Activated CD4-positive, alpha-beta memory T cell treated with anti-CD3 and anti-CD28 coated beads for 36 hours (primary cell): ENCODE measurements at regions of chr19 and their contacts with region 1.

Region 1: DNA sequence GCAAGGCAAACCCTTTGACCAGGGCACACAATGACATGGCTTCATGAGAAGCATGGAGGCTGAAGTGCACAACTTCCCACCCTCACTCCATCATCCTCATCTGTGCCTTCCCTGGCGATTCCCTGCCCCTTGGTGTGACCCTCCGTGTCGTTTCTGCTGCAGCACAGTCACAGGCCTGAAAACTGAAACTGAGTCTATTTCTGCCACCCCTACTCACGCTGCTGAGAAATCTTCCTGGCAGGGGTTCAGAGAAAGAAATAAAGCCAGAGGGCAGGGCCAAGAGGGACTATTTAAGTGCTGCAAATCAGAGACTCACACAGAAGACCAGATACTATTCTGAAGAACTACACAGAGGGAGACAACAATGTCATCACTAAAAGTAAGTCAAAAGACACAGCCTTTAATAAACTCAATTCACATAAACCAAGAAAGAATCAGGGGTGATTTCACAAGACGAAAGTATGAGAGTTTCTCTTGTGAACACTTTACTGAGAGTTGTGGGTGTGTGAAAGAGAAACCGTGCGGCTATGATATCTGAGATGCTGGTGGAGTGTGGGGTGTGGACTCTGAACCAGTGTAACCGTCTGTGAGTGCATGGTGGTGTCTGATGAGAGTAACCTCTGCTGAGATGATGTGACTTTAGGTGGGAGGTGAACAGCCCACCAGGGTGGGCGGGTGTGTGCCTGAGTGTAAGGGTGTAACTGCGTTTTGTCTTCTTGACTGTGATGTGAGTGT is 23.5 kb downstream of the LGALS16 start:
- DNase-seq: peak; percentile 80
- H3K4me3 Mint-ChIP-seq: peak overlapping the region; percentile 76
- H3K27ac Mint-ChIP-seq: peak overlapping the region; percentile 93
- H3K4me1 Mint-ChIP-seq: peaks cover 55% of the 10 kb centered on the region
- H3K27me3 Mint-ChIP-seq: no peaks in the 10 kb centered on the region

Region 2: GRCh38 chr19:39539519-39540332 is 139.5 kb before region 1 on chr19 and contains the start of gene EID2:
- CTCF ChIA-PET with region 1: interaction called, 3 read pairs
- POLR2A ChIA-PET with region 1: interaction called, 4 read pairs
- intact Hi-C with region 1: loop called (anchors 5 kb)
- DNase-seq: peak; percentile 98
- H3K4me3 Mint-ChIP-seq: peak within 1 kb of the TSS; percentile 94
- H3K27ac Mint-ChIP-seq: peak within 1 kb of the TSS; percentile 96
- H3K4me1 Mint-ChIP-seq: peaks cover 51% of the 10 kb centered on the region
- H3K27me3 Mint-ChIP-seq: peaks cover 2% of the 10 kb centered on the region
- total RNA-seq, gene EID2: 13.0 to 13.1 TPM

Region 3: DNA sequence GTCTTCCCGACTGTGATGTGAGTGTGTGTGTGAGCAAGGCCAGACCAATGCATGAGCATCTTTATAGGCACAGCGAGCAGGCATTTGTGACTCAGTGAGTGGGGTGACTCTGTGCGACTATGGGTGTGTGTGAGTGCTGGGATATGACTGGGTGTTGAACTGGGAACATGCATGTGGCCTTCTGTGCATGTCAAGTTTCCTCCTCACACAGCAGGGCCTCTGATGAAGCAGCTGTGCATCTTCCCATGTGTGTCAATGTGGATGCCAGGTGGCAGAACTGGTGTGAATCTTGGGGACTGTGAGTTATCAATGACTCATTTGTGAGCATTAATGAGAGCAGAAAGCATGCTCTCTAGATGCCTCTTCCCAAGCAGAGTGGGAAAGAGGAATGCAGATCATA is 12.9 kb after region 1 on chr19:
- CTCF ChIA-PET with region 1: interaction called, 3 read pairs
- POLR2A ChIA-PET with region 1: no interaction called
- intact Hi-C with region 1: loop called (anchors 1 kb)
- DNase-seq: peak; percentile 49
- H3K4me3 Mint-ChIP-seq: no peak overlapping the region
- H3K27ac Mint-ChIP-seq: no peak overlapping the region
- H3K4me1 Mint-ChIP-seq: peaks cover 5% of the 10 kb centered on the region
- H3K27me3 Mint-ChIP-seq: peaks cover 3% of the 10 kb centered on the region

Region 4: GRCh38 chr19:39704181-39705044 is 25.2 kb after region 1 on chr19 and contains the start of gene LGALS14:
- CTCF ChIA-PET with region 1: interaction called, 4 read pairs
- POLR2A ChIA-PET with region 1: interaction called, 4 read pairs
- intact Hi-C with region 1: loop called (anchors 1 kb)
- DNase-seq: peak; percentile 65
- H3K4me3 Mint-ChIP-seq: peak within 1 kb of the TSS; percentile 40
- H3K27ac Mint-ChIP-seq: peak within 1 kb of the TSS; percentile 75
- H3K4me1 Mint-ChIP-seq: peaks cover 43% of the 10 kb centered on the region
- H3K27me3 Mint-ChIP-seq: peaks cover 5% of the 10 kb centered on the region
- total RNA-seq, gene LGALS14: 1.6 to 2.5 TPM

Region 5: GRCh38 chr19:39735688-39736087 is 56.5 kb after region 1 on chr19:
- CTCF ChIA-PET with region 1: interaction called, 4 read pairs
- POLR2A ChIA-PET with region 1: no interaction called
- intact Hi-C with region 1: loop called (anchors 1 kb)
- DNase-seq: no peak
- H3K4me3 Mint-ChIP-seq: no peak overlapping the region
- H3K27ac Mint-ChIP-seq: peak overlapping the region; percentile 78
- H3K4me1 Mint-ChIP-seq: peaks cover 48% of the 10 kb centered on the region
- H3K27me3 Mint-ChIP-seq: peaks cover 2% of the 10 kb centered on the region

Region 6: GRCh38 chr19:39846176-39846677 is 167.0 kb after region 1 on chr19 and contains the start of gene FBL:
- CTCF ChIA-PET with region 1: interaction called, 42 read pairs
- POLR2A ChIA-PET with region 1: no interaction called
- intact Hi-C with region 1: loop called (anchors 2 kb)
- DNase-seq: peak; percentile 98
- H3K4me3 Mint-ChIP-seq: peak within 1 kb of the TSS; percentile 94
- H3K27ac Mint-ChIP-seq: peak within 1 kb of the TSS; percentile 90
- H3K4me1 Mint-ChIP-seq: peaks cover 45% of the 10 kb centered on the region
- H3K27me3 Mint-ChIP-seq: no peaks in the 10 kb centered on the region
- total RNA-seq, gene FBL: 579 to 589 TPM